ENCODE measurements at regions of chr2 and their contacts with region 1.

Region 1: GRCh38 chr2:101205521-101205998 is 47.1 kb upstream of the CNOT11 start:
- DNase-seq: no peak
- H3K4me3 ChIP-seq: no peak overlapping the region
- H3K27me3 ChIP-seq: no peaks in the 10 kb centered on the region
- CTCF ChIP-seq: peak; percentile 69

Region 2: GRCh38 chr2:100610381-100610831 is 595.2 kb before region 1 on chr2:
- CTCF ChIA-PET with region 1: interaction called, 15 read pairs
- POLR2A ChIA-PET with region 1: interaction called, 5 read pairs
- DNase-seq: no peak
- H3K4me3 ChIP-seq: no peak overlapping the region
- H3K27me3 ChIP-seq: peaks cover 3% of the 10 kb centered on the region
- CTCF ChIP-seq: peak; percentile 83

Region 3: GRCh38 chr2:101030863-101031554 is 174.6 kb before region 1 on chr2:
- CTCF ChIA-PET with region 1: interaction called, 101 read pairs
- POLR2A ChIA-PET with region 1: no interaction called
- DNase-seq: no peak
- H3K4me3 ChIP-seq: no peak overlapping the region
- H3K27me3 ChIP-seq: no peaks in the 10 kb centered on the region
- CTCF ChIP-seq: no peak

Region 4: GRCh38 chr2:101036562-101037457 is 168.8 kb before region 1 on chr2:
- CTCF ChIA-PET with region 1: interaction called, 101 read pairs
- POLR2A ChIA-PET with region 1: no interaction called
- DNase-seq: peak; percentile 10
- H3K4me3 ChIP-seq: no peak overlapping the region
- H3K27me3 ChIP-seq: no peaks in the 10 kb centered on the region
- CTCF ChIP-seq: peak; percentile 57

Region 5: GRCh38 chr2:101188683-101189405 is 16.7 kb before region 1 on chr2:
- CTCF ChIA-PET with region 1: interaction called, 47 read pairs
- POLR2A ChIA-PET with region 1: no interaction called
- DNase-seq: no peak
- H3K4me3 ChIP-seq: no peak overlapping the region
- H3K27me3 ChIP-seq: peaks cover 3% of the 10 kb centered on the region
- CTCF ChIP-seq: peak; percentile 78

Region 6: DNA sequence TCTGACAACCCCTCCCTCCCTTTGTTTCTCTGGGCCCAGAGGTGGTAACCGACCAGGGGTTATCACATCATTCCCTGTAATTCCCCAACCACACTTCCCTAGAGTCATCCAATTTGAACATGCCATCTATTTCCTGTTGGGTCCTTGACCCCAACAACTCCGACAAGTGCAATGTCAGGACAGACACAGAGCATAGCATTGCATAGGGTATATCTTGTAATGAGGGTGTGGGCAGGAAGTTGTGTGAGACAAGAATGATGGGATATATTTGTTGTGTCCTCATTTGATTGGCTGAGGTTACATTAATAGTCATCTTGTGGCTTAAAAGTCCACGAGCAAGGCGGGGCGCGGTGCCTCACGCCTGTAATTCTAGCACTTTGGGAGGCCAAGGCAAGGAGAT is 13.7 kb after region 1 on chr2:
- CTCF ChIA-PET with region 1: interaction called, 29 read pairs
- POLR2A ChIA-PET with region 1: no interaction called
- DNase-seq: no peak
- H3K4me3 ChIP-seq: no peak overlapping the region
- H3K27me3 ChIP-seq: peaks cover 3% of the 10 kb centered on the region; the same call in 1 of the 2 replicates
- CTCF ChIP-seq: no peak